Tibial artery (tissue), 4 donors: ENCODE measurements at regions of chr1 and their contacts with region 1.

Region 1: GRCh38 chr1:166905900-166906299 is 29.8 kb upstream of the TADA1 start:
- DNase-seq: no peak
- H3K4me3 ChIP-seq: no peak overlapping the region
- H3K27ac ChIP-seq: peak overlapping the region; percentile 22 to 50
- H3K4me1 ChIP-seq: peaks cover 0 to 25% (median 7%) of the 10 kb centered on the region in 4 donors
- H3K27me3 ChIP-seq: no peaks in the 10 kb centered on the region
- CTCF ChIP-seq: no peak

Region 2: DNA sequence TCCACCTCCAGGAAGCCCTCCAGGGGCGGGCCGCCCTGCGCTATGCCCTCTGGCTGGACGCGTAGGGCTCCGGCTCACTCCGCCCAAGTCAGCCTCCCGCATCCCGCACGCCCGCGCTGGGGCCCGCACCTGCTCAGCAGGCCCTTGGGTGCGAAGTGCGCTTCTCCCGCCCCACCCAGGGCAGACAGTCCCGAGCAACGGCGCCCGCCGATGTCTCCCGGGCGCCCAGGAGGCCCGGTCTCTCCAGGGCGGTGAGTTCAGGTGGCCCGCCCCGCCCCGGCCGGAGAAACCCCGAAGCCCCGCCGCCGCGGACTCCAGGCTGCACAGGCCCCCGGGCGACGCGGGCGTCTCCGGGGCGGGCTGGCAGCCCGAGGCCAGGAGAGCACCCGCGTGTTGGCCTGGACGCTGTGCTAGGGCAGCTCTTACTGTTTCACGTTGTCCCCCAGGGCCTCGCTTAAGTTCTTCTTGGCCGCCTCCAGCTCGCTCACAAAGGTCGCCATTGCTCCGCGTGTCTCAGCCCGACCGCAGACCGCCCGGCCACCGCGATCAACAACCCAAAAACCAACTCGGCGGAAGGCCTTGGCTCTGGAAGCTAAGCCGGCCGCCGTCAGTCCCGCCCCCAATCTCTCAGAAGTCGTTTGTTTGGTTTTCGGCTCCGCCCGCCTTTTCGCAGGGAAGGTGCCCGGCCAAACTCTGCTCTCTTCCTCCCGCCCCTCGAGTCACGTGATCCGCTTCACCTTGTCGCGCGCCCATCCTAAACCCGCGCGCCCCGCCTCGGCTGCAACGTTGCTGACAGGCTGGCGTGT is 30.0 kb before region 1 on chr1 and contains the start of gene TADA1:
- intact Hi-C with region 1: no loop called
- DNase-seq: peak; percentile 99
- H3K4me3 ChIP-seq: peak within 1 kb of the TSS; percentile 86 to 89
- H3K27ac ChIP-seq: peak within 1 kb of the TSS; percentile 89 to 91
- H3K4me1 ChIP-seq: peaks cover 0 to 18% (median 12%) of the 10 kb centered on the region in 4 donors
- H3K27me3 ChIP-seq: no peaks in the 10 kb centered on the region
- CTCF ChIP-seq: no peak

Region 3: DNA sequence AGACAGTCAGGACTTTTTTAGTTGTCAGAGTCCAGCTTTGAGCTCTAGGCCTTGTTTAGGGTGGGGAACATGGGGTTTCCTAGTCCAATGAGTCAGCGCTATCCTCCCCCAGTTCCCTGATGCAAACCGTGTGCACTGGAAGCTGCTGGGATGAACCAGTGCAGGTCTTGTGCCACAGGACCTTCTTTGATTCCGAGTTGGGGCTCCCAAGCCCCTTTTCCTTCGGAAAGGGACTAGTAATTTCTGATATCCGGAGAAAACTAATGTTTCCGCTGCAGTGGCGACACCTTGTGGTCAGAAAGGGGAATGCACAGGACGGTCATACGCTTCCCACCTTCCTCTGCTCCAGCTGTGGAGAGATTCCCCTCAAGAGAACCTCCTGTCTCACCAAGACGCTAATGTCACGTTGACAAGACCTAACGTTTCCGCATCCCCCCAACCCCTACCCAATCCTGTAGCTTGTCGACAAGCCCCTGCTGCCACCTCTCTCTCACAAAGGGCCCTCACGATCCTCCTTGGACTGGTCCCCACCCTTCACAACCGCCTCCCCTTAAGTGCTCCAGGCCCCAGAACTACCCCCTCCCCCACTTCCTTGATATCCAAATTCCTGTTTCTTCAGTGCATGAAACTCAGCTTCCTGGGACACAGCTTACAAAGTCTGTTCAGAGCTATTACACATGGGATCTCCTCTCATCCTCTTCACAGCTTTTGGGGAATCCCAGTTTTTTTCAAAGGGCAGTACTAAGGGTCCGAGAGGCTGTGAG is 153.3 kb after region 1 on chr1:
- intact Hi-C with region 1: loop called (anchors 5 kb)
- DNase-seq: peak in 1 of 2 donors; percentile 66
- H3K4me3 ChIP-seq: no peak overlapping the region
- H3K27ac ChIP-seq: no peak overlapping the region
- H3K4me1 ChIP-seq: peaks cover 0 to 4% (median 3%) of the 10 kb centered on the region in 4 donors
- H3K27me3 ChIP-seq: peaks cover 0 to 23% of the 10 kb centered on the region in 2 donors
- CTCF ChIP-seq: peak; percentile 89 to 93